ENCODE measurements at regions of chr1 and their contacts with region 1.

Region 1: GRCh38 chr1:119647734-119648619 is at the start of gene ZNF697:
- DNase-seq: peak; percentile 97
- H3K4me3 ChIP-seq: peak within 1 kb of the TSS; percentile 64 to 83 (median 71)
- H3K27ac ChIP-seq: peak within 1 kb of the TSS; percentile 67
- H3K4me1 ChIP-seq: peaks cover 47% of the 10 kb centered on the region
- H3K27me3 ChIP-seq: no peaks in the 10 kb centered on the region
- CTCF ChIP-seq: peak; percentile 4 to 11
- total RNA-seq, gene ZNF697: 7.3 to 9.4 TPM

Region 2: DNA sequence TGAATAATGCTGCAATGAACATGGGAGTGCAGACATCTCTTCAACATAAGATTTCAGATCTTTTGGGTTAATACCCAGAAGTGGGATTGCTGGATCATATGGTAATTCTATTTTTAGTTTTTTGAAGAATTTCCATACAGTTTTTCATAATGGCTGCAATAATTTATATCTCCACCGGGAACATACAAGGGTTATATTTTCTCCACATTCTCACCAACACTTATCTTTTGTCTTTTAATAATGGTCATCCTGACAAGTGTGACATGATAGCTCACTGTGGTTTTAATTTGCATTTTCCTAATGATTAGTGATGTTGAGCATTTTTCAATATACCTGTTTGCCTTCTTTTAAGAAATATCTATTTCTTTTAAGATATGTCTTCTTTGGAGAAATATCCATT is 463.0 kb before region 1 on chr1:
- CTCF ChIA-PET with region 1: no interaction called
- dilution Hi-C with region 1: no loop called
- in situ Hi-C with region 1: no loop called
- intact Hi-C with region 1: no loop called
- DNase-seq: no peak
- H3K4me3 ChIP-seq: no peak overlapping the region
- H3K27ac ChIP-seq: no peak overlapping the region
- H3K4me1 ChIP-seq: no peaks in the 10 kb centered on the region
- H3K27me3 ChIP-seq: no peaks in the 10 kb centered on the region
- CTCF ChIP-seq: no peak

Region 3: GRCh38 chr1:119667173-119667572 is 19.2 kb after region 1 on chr1:
- CTCF ChIA-PET with region 1: interaction called, 11 read pairs
- dilution Hi-C with region 1: no loop called
- in situ Hi-C with region 1: no loop called
- intact Hi-C with region 1: no loop called
- DNase-seq: no peak
- H3K4me3 ChIP-seq: no peak overlapping the region
- H3K27ac ChIP-seq: no peak overlapping the region
- H3K4me1 ChIP-seq: peaks cover 3% of the 10 kb centered on the region
- H3K27me3 ChIP-seq: no peaks in the 10 kb centered on the region
- CTCF ChIP-seq: no peak